Panc1 (cell line): ENCODE measurements at regions of chr14 and their contacts with region 1.

Region 1: DNA sequence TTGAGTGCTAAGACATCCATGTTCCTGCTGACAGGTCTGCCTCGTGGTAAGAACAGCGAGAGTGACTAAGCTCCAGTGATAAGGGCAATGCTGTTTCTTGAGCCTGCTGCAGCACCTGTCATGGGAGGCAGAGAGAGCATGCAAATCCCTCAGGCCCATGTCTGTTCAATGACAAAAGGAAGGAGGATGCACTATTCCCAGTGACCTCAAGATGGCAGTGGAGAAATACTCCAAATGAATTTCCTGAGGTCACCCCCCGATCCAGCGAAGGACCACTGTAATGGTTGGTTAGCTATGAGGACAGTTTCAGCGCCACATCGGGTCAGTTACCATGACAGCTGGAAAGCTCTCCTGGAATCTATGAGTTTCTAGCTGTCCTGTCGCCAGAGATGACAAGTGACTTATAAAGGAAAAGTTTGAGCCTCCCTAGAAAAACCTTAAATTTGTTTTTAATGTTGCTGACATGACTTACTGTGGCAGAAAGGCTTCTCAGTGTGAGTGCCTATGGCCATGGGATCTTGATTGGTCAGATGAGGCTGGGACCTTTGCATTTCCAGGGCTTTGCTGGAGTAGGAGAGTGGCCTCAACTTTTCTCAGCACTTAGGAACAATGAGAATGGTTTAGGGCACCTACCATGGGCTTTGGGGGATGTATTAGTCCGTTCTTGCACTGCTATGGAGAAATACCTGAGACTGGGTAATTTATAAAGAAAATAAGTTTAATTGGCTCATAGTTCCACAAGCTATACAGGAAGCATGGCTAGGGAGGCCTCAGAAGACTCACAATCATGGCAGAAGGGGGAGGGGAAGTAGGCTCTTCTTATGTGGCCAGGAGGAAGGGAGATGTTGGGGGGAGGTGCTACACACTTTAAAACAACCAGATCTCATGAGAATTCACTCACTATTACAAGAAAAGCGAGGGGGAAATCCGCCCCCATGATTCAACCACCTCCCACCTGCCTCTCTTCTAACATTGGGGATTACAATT is 88.0 kb upstream of the TMEM260 start:
- DNase-seq: peak; percentile 35
- ATAC-seq: 0 out of 2 replicates have a peak, but pooled peaks have one; percentile 63
- H3K4me3 ChIP-seq: no peak overlapping the region
- H3K27ac ChIP-seq: no peak overlapping the region
- H3K4me1 ChIP-seq: no peaks in the 10 kb centered on the region
- H3K27me3 ChIP-seq: no peaks in the 10 kb centered on the region
- CTCF ChIP-seq: peak; percentile 74

Region 2: DNA sequence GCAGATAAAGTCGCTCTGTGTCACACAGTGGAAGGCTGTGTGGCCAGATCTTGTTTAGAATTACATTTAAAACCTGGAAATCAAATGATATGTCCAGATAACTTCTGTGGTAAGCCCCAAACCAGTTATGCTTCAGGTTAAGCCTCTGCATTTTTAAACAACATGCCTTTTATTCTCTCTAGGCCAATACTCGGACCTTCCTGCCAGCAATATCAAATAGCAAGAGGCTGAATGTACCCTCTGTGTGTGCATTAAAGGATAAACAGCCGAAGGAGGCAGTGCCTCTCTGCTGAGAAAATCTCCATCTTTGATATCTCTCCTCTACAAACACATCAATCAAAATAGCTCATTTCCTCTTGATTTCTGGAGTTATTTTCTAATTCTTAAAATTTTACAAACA is 20.9 kb after region 1 on chr14:
- CTCF ChIA-PET with region 1: no interaction called
- POLR2A ChIA-PET with region 1: no interaction called
- in situ Hi-C with region 1: no loop called
- intact Hi-C with region 1: no loop called
- DNase-seq: no peak
- ATAC-seq: no peak
- H3K4me3 ChIP-seq: no peak overlapping the region
- H3K27ac ChIP-seq: no peak overlapping the region
- H3K4me1 ChIP-seq: no peaks in the 10 kb centered on the region
- H3K27me3 ChIP-seq: peaks cover 4% of the 10 kb centered on the region
- CTCF ChIP-seq: no peak

Region 3: GRCh38 chr14:57182760-57183503 is 691.3 kb after region 1 on chr14:
- CTCF ChIA-PET with region 1: no interaction called
- POLR2A ChIA-PET with region 1: no interaction called
- in situ Hi-C with region 1: no loop called
- intact Hi-C with region 1: loop called (anchors 2 kb)
- DNase-seq: no peak
- ATAC-seq: peak; percentile 63; the same call in 1 of the 2 replicates
- H3K4me3 ChIP-seq: no peak overlapping the region
- H3K27ac ChIP-seq: no peak overlapping the region
- H3K4me1 ChIP-seq: no peaks in the 10 kb centered on the region
- H3K27me3 ChIP-seq: peaks cover 1% of the 10 kb centered on the region; the same call in 1 of the 2 replicates
- CTCF ChIP-seq: peak; percentile 65

Region 4: DNA sequence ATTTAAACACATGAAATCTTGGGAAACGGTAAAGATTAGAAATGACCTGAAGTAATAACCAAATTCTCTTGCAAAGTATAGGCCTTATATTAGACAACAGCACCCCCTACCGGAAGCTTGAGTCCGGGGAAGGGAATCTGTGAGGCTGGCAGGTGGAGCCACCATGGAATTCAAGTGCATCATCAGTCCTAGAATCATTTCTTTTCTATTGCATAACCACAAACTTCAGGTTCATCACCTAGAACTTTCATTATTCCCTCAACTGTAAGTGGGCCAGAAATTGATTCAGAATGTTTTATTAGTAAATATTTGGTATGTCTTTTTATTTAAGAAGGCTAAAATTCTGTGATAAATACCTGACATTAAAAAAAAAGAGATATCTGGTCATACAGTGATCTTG is 825.7 kb after region 1 on chr14:
- CTCF ChIA-PET with region 1: no interaction called
- POLR2A ChIA-PET with region 1: no interaction called
- in situ Hi-C with region 1: no loop called
- intact Hi-C with region 1: loop called (anchors 5 kb)
- DNase-seq: peak; percentile 43
- ATAC-seq: peak; percentile 80
- H3K4me3 ChIP-seq: no peak overlapping the region
- H3K27ac ChIP-seq: no peak overlapping the region
- H3K4me1 ChIP-seq: no peaks in the 10 kb centered on the region
- H3K27me3 ChIP-seq: no peaks in the 10 kb centered on the region; the same call in 1 of the 2 replicates
- CTCF ChIP-seq: peak; percentile 79